Panc1 (cell line): ENCODE measurements at regions of chr11 and their contacts with region 1.

Region 1: GRCh38 chr11:19374151-19374569 is 133.4 kb upstream of the E2F8 start:
- DNase-seq: no peak
- ATAC-seq: no peak
- H3K4me3 ChIP-seq: no peak overlapping the region
- H3K27ac ChIP-seq: no peak overlapping the region
- H3K4me1 ChIP-seq: no peaks in the 10 kb centered on the region
- H3K27me3 ChIP-seq: peaks cover 21% of the 10 kb centered on the region
- CTCF ChIP-seq: no peak

Region 2: GRCh38 chr11:19326499-19326898 is 47.7 kb before region 1 on chr11:
- CTCF ChIA-PET with region 1: no interaction called
- POLR2A ChIA-PET with region 1: no interaction called
- in situ Hi-C with region 1: no loop called
- intact Hi-C with region 1: no loop called
- DNase-seq: no peak
- ATAC-seq: no peak
- H3K4me3 ChIP-seq: no peak overlapping the region
- H3K27ac ChIP-seq: no peak overlapping the region
- H3K4me1 ChIP-seq: no peaks in the 10 kb centered on the region
- H3K27me3 ChIP-seq: peaks cover 13% of the 10 kb centered on the region
- CTCF ChIP-seq: no peak; the same call in 1 of the 2 replicates

Region 3: DNA sequence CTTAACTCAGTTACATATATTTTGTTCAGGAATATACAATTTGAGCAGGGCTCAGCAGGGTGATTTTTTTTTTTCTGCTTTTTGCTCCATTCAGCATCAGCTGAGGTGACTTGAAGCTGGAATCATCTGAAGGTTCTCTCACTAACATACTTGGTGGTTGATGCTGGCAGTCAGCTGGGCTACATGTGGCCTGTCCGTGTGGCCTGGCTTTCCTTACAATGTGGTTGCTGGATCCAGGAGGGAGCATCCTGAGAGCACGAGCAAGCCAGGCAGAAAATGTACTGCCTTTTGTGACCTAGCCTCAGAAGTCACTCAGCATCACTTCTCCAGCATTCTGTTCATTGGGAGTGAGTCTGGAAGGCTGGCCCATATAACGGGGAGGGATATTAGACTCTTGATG is 18.2 kb after region 1 on chr11:
- CTCF ChIA-PET with region 1: no interaction called
- POLR2A ChIA-PET with region 1: no interaction called
- in situ Hi-C with region 1: no loop called
- intact Hi-C with region 1: loop called (anchors 1 kb)
- DNase-seq: no peak
- ATAC-seq: no peak
- H3K4me3 ChIP-seq: no peak overlapping the region
- H3K27ac ChIP-seq: no peak overlapping the region
- H3K4me1 ChIP-seq: no peaks in the 10 kb centered on the region
- H3K27me3 ChIP-seq: peaks cover 16% of the 10 kb centered on the region
- CTCF ChIP-seq: no peak

Region 4: DNA sequence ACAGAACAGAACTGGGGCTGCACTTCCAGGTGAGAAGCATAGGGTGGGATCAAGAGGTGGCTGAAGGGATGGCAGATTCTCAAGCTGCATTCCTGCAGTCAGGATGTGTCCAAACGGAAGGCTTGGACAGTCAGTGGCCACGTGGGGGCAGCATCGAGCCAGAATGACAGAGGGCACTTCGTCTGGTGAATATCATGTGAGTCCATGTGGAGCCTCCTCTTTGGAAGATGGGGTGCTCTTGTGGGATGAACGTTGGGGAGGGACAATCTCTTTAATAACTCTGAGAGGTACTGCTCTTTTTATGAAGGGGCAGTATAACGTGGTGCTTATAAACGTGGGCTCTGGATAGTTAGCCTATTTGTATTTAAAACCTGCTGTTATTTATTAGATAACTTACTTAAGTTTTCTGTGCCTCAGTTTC is 183.6 kb after region 1 on chr11:
- CTCF ChIA-PET with region 1: no interaction called
- POLR2A ChIA-PET with region 1: no interaction called
- in situ Hi-C with region 1: no loop called
- intact Hi-C with region 1: no loop called
- DNase-seq: peak; percentile 53
- ATAC-seq: peak; percentile 84
- H3K4me3 ChIP-seq: no peak overlapping the region
- H3K27ac ChIP-seq: no peak overlapping the region
- H3K4me1 ChIP-seq: no peaks in the 10 kb centered on the region
- H3K27me3 ChIP-seq: peaks cover 9% of the 10 kb centered on the region; the same call in 1 of the 2 replicates
- CTCF ChIP-seq: peak; percentile 90